Mammary epithelial cell (primary cell): ENCODE measurements at regions of chr10 and their contacts with region 1.

Region 1: GRCh38 chr10:36030516-36030915 is 388.4 kb upstream of the FZD8 start:
- DNase-seq: no peak
- H3K4me3 ChIP-seq: no peak overlapping the region
- H3K27ac ChIP-seq: no peak overlapping the region
- H3K4me1 ChIP-seq: no peaks in the 10 kb centered on the region
- H3K27me3 ChIP-seq: no peaks in the 10 kb centered on the region
- CTCF ChIP-seq: no peak

Region 2: DNA sequence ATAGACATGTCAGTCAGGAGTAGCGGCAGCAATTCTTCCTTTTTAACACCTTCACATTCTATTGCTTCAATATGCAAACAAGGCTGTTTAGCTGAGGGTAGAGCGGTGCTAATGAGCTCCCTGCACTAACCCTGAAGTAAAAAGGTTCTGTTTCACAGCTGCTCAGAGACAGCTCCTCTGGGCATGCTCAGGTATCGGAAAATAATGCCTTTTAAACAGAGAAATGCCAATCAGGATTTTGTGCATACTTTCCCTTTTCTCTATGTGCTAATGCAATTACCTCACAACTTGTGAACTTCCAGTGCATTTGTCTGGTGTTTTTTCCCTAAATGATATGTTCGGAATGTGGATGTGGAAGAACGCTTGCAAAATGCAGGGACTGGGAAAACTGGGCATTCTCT is 80.7 kb before region 1 on chr10:
- CTCF ChIA-PET with region 1: no interaction called
- dilution Hi-C with region 1: loop called (anchors 5 kb)
- in situ Hi-C with region 1: no loop called
- intact Hi-C with region 1: no loop called
- DNase-seq: no peak
- H3K4me3 ChIP-seq: no peak overlapping the region
- H3K27ac ChIP-seq: no peak overlapping the region
- H3K4me1 ChIP-seq: no peaks in the 10 kb centered on the region
- H3K27me3 ChIP-seq: no peaks in the 10 kb centered on the region
- CTCF ChIP-seq: no peak

Region 3: GRCh38 chr10:36109399-36110023 is 79.0 kb after region 1 on chr10:
- CTCF ChIA-PET with region 1: no interaction called
- dilution Hi-C with region 1: no loop called
- in situ Hi-C with region 1: no loop called
- intact Hi-C with region 1: no loop called
- DNase-seq: no peak
- H3K4me3 ChIP-seq: no peak overlapping the region
- H3K27ac ChIP-seq: no peak overlapping the region
- H3K4me1 ChIP-seq: peaks cover 3% of the 10 kb centered on the region
- H3K27me3 ChIP-seq: no peaks in the 10 kb centered on the region
- CTCF ChIP-seq: no peak